H1 (cell line): ENCODE measurements at regions of chr7 and their contacts with region 1.

Region 1: DNA sequence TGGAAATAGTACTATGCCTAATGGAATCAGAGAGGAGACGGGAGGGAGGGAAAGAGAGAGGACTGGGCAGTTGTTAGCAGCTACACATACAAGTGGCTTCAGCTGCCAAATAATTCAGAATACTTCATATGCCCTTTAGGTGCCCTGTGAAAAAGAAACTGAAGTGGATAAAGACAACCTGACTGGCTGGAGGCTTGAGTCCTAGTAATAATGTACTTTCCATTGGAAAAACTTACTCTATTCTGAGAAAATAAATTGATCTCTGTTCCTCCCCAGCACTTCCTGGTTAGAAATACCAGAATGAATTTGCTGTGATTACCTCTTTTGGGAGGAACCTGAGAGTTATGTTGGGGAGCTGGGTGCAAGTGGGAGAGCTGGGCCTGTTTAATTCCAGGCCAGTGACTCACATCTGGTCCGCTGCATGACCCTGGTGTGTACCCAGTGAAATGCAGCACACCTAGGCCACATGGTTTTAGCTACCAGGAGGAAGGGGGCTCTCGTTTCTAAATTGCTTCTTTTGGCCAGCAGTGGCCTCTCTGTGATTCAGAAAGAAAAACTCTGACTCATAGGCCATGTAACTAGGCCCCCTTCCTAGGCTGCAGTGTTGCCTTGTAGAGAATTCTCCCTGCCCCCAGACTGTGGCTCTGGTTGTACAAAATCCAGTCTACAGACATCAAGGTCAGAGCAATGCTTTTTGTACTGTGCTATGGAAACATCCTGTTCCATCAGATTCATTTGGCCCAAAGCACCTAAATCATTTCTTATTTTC is 6.5 kb downstream of the AGFG2 start:
- DNase-seq: no peak
- H3K4me3 ChIP-seq: no peak overlapping the region; a peak in 1 of 8 replicates
- H3K27ac ChIP-seq: peak overlapping the region; percentile 0; the same call in 1 of the 2 replicates
- H3K4me1 ChIP-seq: peaks cover 11 to 44% (median 26%) of the 10 kb centered on the region in 4 experiments; a peak in 6 of 7 replicates
- H3K27me3 ChIP-seq: peaks cover 0 to under 1% (median under 1%) of the 10 kb centered on the region in 4 experiments; a peak in 1 of 7 replicates
- CTCF ChIP-seq: peak in 1 of 3 experiments; percentile 12; a peak in 2 of 4 replicates
- EP300 ChIP-seq: no peak
- POLR2A ChIP-seq: peak in 1 of 2 experiments; percentile 33; a peak in 1 of 3 replicates
- RAD21 ChIP-seq: no peak

Region 2: DNA sequence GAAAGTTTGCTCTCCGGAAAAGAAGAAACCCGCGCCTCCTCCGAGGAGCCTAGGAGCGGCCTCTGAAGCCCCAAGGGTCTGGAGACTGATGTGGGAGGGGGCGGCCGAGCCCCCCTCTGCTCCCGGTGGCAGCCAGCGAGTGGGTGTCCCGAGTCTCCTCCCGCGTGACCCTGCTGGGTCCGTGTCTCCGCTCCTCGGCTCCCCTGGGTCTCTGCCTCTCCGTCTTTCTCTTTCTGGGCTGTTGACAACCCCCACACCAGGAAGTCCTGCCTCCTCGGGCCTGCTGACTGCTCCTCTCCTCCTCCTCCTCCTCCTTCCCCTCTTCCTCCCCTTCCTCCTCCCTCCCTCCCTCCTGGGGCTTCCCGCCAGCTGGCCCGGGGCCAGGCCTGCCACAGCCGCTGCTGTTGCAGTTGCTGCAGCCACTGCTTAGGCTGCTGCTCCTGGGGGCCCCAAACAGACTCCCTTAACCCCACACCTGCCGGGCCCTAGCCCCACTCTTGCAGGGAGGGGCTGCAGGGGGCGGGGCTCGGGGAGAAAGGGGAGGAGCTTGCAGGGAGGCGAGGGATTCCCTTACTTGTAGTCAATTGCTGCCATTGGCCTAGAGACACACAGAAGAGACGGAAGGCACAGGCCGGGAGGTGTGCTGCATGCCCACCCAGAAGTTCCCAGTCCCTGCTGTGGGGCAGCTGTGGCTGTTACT is 66.4 kb before region 1 on chr7 and contains the start of gene TSC22D4:
- CTCF ChIA-PET with region 1: interaction called, 13 read pairs
- POLR2A ChIA-PET with region 1: interaction called, 4 read pairs
- DNase-seq: peak; percentile 90 to 96
- H3K4me3 ChIP-seq: peak within 1 kb of the TSS; percentile 78 to 86 (median 81)
- H3K27ac ChIP-seq: no peak within 1 kb of the TSS
- H3K4me1 ChIP-seq: peaks cover 0 to 12% (median 6%) of the 10 kb centered on the region in 4 experiments; a peak in 5 of 7 replicates
- H3K27me3 ChIP-seq: no peaks in the 10 kb centered on the region
- CTCF ChIP-seq: peak in 1 of 3 experiments; percentile 7; a peak in 1 of 4 replicates
- EP300 ChIP-seq: no peak; a peak in 1 of 3 replicates
- POLR2A ChIP-seq: no peak; a peak in 1 of 3 replicates
- RAD21 ChIP-seq: peak in 1 of 2 experiments; percentile 15; a peak in 1 of 4 replicates
- total RNA-seq, gene TSC22D4: 20.3 and 24.1 TPM in 2 replicates

Region 3: GRCh38 chr7:100520138-100520537 is 25.4 kb before region 1 on chr7:
- CTCF ChIA-PET with region 1: no interaction called
- POLR2A ChIA-PET with region 1: no interaction called
- DNase-seq: no peak
- H3K4me3 ChIP-seq: no peak overlapping the region
- H3K27ac ChIP-seq: no peak overlapping the region
- H3K4me1 ChIP-seq: no peaks in the 10 kb centered on the region
- H3K27me3 ChIP-seq: no peaks in the 10 kb centered on the region
- CTCF ChIP-seq: no peak
- EP300 ChIP-seq: no peak
- POLR2A ChIP-seq: no peak
- RAD21 ChIP-seq: no peak

Region 4: DNA sequence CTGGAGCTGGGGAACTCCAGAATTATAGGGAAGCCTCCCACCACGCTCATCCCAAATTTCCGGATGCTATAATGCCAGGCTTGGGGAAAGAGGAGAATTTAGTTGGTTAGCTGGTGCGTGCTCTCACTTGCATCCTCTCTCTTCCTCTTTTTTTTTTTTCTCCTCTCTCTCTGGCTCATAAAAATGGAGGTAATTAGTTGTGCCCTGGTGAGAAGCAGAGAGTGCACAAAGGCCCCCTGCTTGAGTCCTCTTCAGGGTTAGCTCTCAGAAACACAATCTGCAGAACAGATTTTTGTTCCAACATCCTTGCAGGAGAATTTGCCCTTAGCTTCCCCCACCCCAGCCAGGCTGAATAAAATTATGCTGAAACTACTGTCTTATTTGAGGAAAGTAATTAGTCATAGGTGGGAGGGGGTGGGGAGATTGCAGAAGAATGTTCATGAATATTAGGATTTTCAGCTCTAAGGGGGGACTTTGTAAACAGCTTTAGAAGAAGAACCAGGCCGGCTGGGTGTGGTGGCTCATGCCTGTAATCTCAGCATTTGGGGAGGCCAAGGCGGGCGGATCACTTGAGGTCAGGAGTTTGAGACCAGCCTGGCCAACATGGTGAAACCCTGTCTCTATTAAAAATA is 589.0 kb after region 1 on chr7:
- CTCF ChIA-PET with region 1: no interaction called
- POLR2A ChIA-PET with region 1: no interaction called
- DNase-seq: no peak
- H3K4me3 ChIP-seq: no peak overlapping the region; a peak in 2 of 8 replicates
- H3K27ac ChIP-seq: no peak overlapping the region
- H3K4me1 ChIP-seq: peaks cover 2 to 14% (median 6%) of the 10 kb centered on the region in 4 experiments; a peak in 6 of 7 replicates
- H3K27me3 ChIP-seq: peaks cover 0 to 2% (median 0%) of the 10 kb centered on the region in 4 experiments; a peak in 1 of 7 replicates
- CTCF ChIP-seq: no peak
- EP300 ChIP-seq: no peak
- POLR2A ChIP-seq: no peak
- RAD21 ChIP-seq: no peak